ENCODE measurements at regions of chrX and their contacts with region 1.

Region 1: GRCh38 chrX:47233337-47234113 is 716 bp downstream of the USP11 start:
- H3K4me3 Mint-ChIP-seq: peak overlapping the region; percentile 94
- H3K27ac Mint-ChIP-seq: peak overlapping the region; percentile 98
- H3K4me1 Mint-ChIP-seq: peaks cover 10% of the 10 kb centered on the region
- H3K27me3 Mint-ChIP-seq: no peaks in the 10 kb centered on the region

Region 2: DNA sequence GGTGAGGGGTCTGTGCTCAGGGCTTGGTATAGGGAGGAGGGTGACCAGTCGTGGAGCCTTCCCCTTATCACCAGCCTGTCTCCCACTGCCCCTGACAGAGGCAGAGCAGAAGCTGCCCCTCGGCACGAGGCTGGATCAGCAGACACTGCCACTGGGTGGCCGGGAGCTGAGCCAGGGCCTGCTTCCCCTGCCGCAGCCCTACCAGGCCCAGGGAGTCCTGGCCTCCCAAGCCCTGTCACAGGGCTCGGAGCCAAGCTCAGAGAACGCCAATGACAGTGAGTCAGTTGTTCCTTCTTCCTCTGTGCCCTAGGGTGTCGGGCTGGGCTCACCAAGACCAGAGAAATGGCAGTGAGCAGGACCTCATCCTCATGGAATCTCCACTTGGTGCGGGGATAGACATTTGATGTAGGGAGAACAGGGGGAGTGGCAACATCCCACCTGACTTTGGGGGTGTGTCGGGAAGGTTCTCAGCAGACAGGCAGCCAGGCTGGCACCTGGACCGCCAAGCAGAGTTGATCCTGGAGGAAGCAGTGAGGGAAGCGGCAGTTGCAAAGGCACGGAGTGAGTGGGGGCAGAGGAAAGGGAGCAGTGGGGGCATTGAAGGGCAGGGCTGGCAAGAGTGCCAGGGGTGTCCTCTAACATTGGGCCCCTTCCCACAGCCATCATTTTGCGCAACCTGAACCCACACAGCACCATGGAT is 54.2 kb before region 1 on chrX:
- intact Hi-C with region 1: no loop called
- H3K4me3 Mint-ChIP-seq: no peak overlapping the region
- H3K27ac Mint-ChIP-seq: no peak overlapping the region
- H3K4me1 Mint-ChIP-seq: no peaks in the 10 kb centered on the region
- H3K27me3 Mint-ChIP-seq: no peaks in the 10 kb centered on the region

Region 3: GRCh38 chrX:47217642-47218279 is 15.8 kb before region 1 on chrX:
- intact Hi-C with region 1: loop called (anchors 1 kb)
- H3K4me3 Mint-ChIP-seq: peak overlapping the region; percentile 82
- H3K27ac Mint-ChIP-seq: peak overlapping the region; percentile 92
- H3K4me1 Mint-ChIP-seq: peaks cover 65% of the 10 kb centered on the region
- H3K27me3 Mint-ChIP-seq: no peaks in the 10 kb centered on the region

Region 4: GRCh38 chrX:47723689-47724088 is 490.2 kb after region 1 on chrX:
- intact Hi-C with region 1: no loop called
- H3K4me3 Mint-ChIP-seq: no peak overlapping the region
- H3K27ac Mint-ChIP-seq: no peak overlapping the region
- H3K4me1 Mint-ChIP-seq: peaks cover 5% of the 10 kb centered on the region
- H3K27me3 Mint-ChIP-seq: peaks cover 1% of the 10 kb centered on the region

Region 5: DNA sequence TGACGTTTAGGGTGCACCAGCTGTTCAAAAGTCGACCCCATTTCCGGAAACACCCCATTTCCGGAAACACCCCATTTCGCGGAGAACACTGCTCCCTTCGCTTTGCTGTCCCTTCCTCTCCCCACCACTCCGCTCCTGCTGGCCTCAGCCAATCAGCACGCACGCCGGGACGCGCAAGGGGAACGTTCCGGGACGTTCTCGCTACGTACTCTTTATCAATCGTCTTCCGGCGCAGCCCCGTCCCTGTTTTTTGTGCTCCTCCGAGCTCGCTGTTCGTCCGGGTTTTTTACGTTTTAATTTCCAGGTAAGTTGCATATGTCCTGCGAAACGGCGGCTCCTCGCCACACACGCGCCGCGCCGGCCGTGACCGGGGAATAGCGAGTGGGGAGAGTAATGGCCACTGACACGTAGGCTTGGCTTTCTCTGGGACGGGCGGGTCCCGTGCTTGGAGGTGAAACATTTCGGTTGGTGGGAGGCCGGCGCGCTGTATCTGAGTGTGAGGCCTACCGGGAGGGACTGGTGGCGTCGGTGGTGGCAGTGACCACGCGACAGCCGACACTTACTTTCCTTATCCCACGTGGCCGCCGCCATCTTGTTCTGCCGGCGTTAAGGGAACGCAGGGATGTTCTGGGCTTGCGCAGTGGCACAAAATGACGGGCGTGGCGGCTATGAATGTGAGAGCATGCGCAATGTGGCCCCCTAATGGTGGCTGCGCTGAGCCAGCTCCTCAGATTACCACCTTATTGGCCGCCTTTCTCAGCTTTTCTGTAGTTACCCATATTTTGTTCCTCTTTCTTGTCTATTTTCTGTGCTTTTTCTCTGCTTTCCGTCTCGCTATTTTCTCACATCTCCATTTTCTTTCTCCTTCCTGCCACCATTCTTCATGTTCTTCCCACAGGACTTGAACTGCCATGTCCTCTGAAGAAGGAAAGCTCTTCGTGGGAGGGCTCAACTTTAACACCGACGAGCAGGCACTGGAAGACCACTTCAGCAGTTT is 1341.0 kb after region 1 on chrX and contains the start of gene RBM3:
- intact Hi-C with region 1: loop called (anchors 10 kb)
- H3K4me3 Mint-ChIP-seq: peak within 1 kb of the TSS; percentile 79
- H3K27ac Mint-ChIP-seq: peak within 1 kb of the TSS; percentile 100
- H3K4me1 Mint-ChIP-seq: peaks cover 25% of the 10 kb centered on the region
- H3K27me3 Mint-ChIP-seq: no peaks in the 10 kb centered on the region

Measured in dendritic cell treated with granulocyte-macrophage colony-stimulating factor and Interleukin-4, amounts not matched to agents 40 ng/mL and 50 ng/mL, for 4 days (primary cell).